B cell (primary cell): ENCODE measurements at regions of chr11 and their contacts with region 1.

Region 1: GRCh38 chr11:4072668-4073285 is 21.8 kb upstream of the RRM1 start:
- DNase-seq: peak; percentile 82
- ATAC-seq: peak; percentile 73
- H3K4me3 ChIP-seq: no peak overlapping the region
- H3K4me3 Mint-ChIP-seq: no peak overlapping the region
- H3K27ac ChIP-seq: peak overlapping the region in 1 of 2 donors; percentile 31
- H3K27ac Mint-ChIP-seq: peak overlapping the region; percentile 5
- H3K4me1 ChIP-seq: peaks cover 4 to 14% of the 10 kb centered on the region in 2 donors
- H3K4me1 Mint-ChIP-seq: peaks cover 20% of the 10 kb centered on the region
- H3K27me3 ChIP-seq: no peaks in the 10 kb centered on the region
- H3K27me3 Mint-ChIP-seq: no peaks in the 10 kb centered on the region
- CTCF ChIP-seq: peak; percentile 95

Region 2: GRCh38 chr11:3767536-3767935 is 305.2 kb before region 1 on chr11:
- CTCF ChIA-PET with region 1: interaction called, 9 read pairs
- POLR2A ChIA-PET with region 1: interaction called, 17 read pairs
- intact Hi-C with region 1: no loop called
- DNase-seq: no peak
- ATAC-seq: no peak
- H3K4me3 ChIP-seq: no peak overlapping the region
- H3K4me3 Mint-ChIP-seq: no peak overlapping the region
- H3K27ac ChIP-seq: no peak overlapping the region
- H3K27ac Mint-ChIP-seq: no peak overlapping the region
- H3K4me1 ChIP-seq: no peaks in the 10 kb centered on the region
- H3K4me1 Mint-ChIP-seq: no peaks in the 10 kb centered on the region
- H3K27me3 ChIP-seq: no peaks in the 10 kb centered on the region
- H3K27me3 Mint-ChIP-seq: no peaks in the 10 kb centered on the region
- CTCF ChIP-seq: no peak

Region 3: DNA sequence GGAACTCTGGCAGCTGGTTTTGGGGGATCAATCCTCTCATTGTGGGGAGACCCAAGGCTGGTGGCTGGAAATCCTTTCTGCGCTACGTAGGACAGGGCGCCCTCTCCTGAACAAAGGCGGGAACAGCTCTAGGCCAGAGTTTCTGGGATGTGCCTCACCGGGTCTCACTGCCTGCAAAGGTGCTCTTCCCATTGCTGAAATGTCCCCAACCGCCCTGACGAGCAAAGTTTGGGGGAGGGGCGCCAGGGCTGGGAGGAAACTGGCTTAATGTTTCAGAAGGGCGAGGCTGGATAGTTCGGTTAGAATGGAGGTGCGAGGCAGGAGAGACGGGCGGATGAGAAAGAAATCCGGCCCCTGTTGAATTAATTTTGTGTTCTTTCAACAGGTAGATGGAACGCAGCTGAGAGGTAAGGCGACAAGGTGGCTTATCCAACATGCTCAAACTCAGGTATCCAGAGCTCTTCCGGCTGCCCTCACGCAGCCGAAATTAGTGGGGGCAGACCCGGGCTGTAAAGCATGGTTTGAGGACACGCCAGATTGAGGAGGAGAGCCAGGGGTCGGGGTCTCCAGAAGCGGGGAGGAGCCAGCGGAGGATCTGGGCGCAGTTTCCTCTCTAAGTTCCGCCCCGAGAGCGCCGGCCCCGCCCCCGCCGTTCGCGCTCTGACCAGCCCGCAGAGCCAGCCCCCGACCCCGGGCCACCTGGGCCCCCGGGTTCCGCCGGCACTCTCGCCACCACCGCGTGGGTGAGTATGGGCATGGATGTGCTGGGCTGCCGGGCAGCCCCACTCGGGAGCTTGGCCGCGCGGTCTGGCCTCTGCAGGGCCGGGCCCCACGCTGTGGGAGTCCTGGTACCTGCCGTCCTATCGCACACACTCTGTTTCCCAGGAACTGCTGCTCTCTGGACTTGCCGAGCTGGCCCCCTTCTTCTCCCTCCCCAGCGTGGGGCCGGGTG is 264.6 kb before region 1 on chr11 and contains the start of gene PGAP2:
- CTCF ChIA-PET with region 1: interaction called, 54 read pairs
- POLR2A ChIA-PET with region 1: interaction called, 3 read pairs
- intact Hi-C with region 1: no loop called
- DNase-seq: peak; percentile 71
- ATAC-seq: peak; percentile 85
- H3K4me3 ChIP-seq: peak within 1 kb of the TSS; percentile 91 to 99 (median 96)
- H3K4me3 Mint-ChIP-seq: peak within 1 kb of the TSS; percentile 98
- H3K27ac ChIP-seq: peak within 1 kb of the TSS; percentile 59 to 60
- H3K27ac Mint-ChIP-seq: peak within 1 kb of the TSS; percentile 92
- H3K4me1 ChIP-seq: peaks cover 6 to 17% of the 10 kb centered on the region in 2 donors
- H3K4me1 Mint-ChIP-seq: peaks cover 11% of the 10 kb centered on the region
- H3K27me3 ChIP-seq: no peaks in the 10 kb centered on the region
- H3K27me3 Mint-ChIP-seq: no peaks in the 10 kb centered on the region
- CTCF ChIP-seq: peak; percentile 61
- total RNA-seq, gene PGAP2: 20.5 and 20.8 TPM in 2 replicates

Region 4: DNA sequence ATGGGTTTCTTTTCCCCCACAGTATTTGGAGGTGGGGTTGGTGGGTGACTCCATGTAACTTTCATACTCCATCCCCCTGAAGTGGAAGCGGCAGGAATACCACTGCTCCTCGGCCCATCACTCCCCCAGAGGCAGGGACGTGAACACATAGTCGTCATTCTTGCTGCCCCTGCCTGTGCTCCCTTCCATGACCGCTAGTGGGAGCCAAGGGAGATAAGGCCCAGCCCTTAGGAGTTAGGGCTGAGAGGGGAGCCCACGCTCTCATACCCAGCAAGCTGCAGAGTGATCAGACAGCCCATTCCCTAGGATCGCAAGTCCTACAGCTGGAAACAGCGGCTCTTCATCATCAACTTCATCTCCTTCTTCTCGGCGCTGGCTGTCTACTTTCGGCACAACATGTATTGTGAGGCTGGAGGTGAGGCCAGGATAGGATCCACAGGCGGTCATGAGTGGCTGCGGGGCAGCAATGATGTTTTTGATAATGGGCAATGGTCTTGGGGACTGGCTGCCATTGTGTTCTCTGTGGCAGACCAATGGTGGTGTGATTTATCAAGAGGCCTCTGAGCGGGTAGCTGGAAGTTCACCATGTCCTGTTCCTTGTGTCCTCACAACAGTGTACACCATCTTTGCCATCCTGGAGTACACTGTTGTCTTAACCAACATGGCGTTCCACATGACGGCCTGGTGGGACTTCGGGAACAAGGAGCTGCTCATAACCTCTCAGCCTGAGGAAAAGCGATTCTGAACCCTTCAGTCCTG is 247.9 kb before region 1 on chr11:
- CTCF ChIA-PET with region 1: interaction called, 18 read pairs
- POLR2A ChIA-PET with region 1: no interaction called
- intact Hi-C with region 1: loop called (anchors 1 kb)
- DNase-seq: peak; percentile 83
- ATAC-seq: peak; percentile 96
- H3K4me3 ChIP-seq: no peak overlapping the region
- H3K4me3 Mint-ChIP-seq: no peak overlapping the region
- H3K27ac ChIP-seq: peak overlapping the region in 1 of 2 donors; percentile 74
- H3K27ac Mint-ChIP-seq: peak overlapping the region; percentile 69
- H3K4me1 ChIP-seq: peaks cover 13 to 15% of the 10 kb centered on the region in 2 donors
- H3K4me1 Mint-ChIP-seq: peaks cover 26% of the 10 kb centered on the region
- H3K27me3 ChIP-seq: no peaks in the 10 kb centered on the region
- H3K27me3 Mint-ChIP-seq: no peaks in the 10 kb centered on the region
- CTCF ChIP-seq: peak; percentile 81

Region 5: GRCh38 chr11:3867209-3868091 is 205.3 kb before region 1 on chr11:
- CTCF ChIA-PET with region 1: interaction called, 20 read pairs
- POLR2A ChIA-PET with region 1: no interaction called
- intact Hi-C with region 1: no loop called
- DNase-seq: peak; percentile 52
- ATAC-seq: peak; percentile 50
- H3K4me3 ChIP-seq: no peak overlapping the region
- H3K4me3 Mint-ChIP-seq: peak overlapping the region; percentile 74
- H3K27ac ChIP-seq: peak overlapping the region; percentile 14 to 55
- H3K27ac Mint-ChIP-seq: peak overlapping the region; percentile 87
- H3K4me1 ChIP-seq: peaks cover 65 to 68% of the 10 kb centered on the region in 2 donors
- H3K4me1 Mint-ChIP-seq: peaks cover 79% of the 10 kb centered on the region
- H3K27me3 ChIP-seq: no peaks in the 10 kb centered on the region
- H3K27me3 Mint-ChIP-seq: no peaks in the 10 kb centered on the region
- CTCF ChIP-seq: no peak

Region 6: DNA sequence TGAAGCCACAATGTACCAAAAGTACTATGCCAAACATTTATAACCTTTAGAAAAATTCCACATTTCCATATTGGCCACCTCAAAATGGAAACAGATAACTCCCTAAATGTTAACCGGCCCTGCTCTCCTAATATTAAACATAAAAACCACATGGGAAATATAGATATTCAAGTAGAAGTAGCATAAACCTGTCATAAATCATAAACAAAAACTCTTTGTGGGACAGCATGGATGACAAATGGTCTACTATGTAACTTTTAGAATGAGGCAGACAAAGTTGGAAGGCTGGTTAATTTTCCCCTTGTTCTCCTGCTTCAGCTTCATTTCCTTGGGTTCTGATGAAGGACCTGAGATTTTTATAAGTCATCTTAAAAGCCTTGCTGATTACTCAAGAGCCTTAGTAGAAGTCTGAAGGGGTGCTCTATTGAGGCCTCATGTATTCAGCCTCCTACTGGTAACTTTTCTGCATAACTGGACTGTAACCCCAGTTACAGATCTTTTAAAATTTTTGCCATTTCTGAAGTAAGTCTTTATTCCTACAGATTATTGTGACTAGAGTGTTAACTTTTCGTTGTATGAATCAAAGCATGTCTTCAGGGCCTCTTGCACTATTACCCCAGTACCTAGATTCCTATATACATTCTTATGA is 100.9 kb before region 1 on chr11:
- CTCF ChIA-PET with region 1: interaction called, 13 read pairs
- POLR2A ChIA-PET with region 1: interaction called, 4 read pairs
- intact Hi-C with region 1: no loop called
- DNase-seq: peak; percentile 33
- ATAC-seq: no peak
- H3K4me3 ChIP-seq: no peak overlapping the region
- H3K4me3 Mint-ChIP-seq: no peak overlapping the region
- H3K27ac ChIP-seq: peak overlapping the region in 1 of 2 donors; percentile 19
- H3K27ac Mint-ChIP-seq: no peak overlapping the region
- H3K4me1 ChIP-seq: no peaks in the 10 kb centered on the region
- H3K4me1 Mint-ChIP-seq: peaks cover 23% of the 10 kb centered on the region
- H3K27me3 ChIP-seq: no peaks in the 10 kb centered on the region
- H3K27me3 Mint-ChIP-seq: no peaks in the 10 kb centered on the region
- CTCF ChIP-seq: peak; percentile 35

Region 7: GRCh38 chr11:4086575-4087353 is 14.0 kb after region 1 on chr11:
- CTCF ChIA-PET with region 1: interaction called, 26 read pairs
- POLR2A ChIA-PET with region 1: no interaction called
- intact Hi-C with region 1: no loop called
- DNase-seq: no peak
- ATAC-seq: no peak
- H3K4me3 ChIP-seq: no peak overlapping the region
- H3K4me3 Mint-ChIP-seq: no peak overlapping the region
- H3K27ac ChIP-seq: no peak overlapping the region
- H3K27ac Mint-ChIP-seq: no peak overlapping the region
- H3K4me1 ChIP-seq: peaks cover 0 to 10% of the 10 kb centered on the region in 2 donors
- H3K4me1 Mint-ChIP-seq: peaks cover 7% of the 10 kb centered on the region
- H3K27me3 ChIP-seq: no peaks in the 10 kb centered on the region
- H3K27me3 Mint-ChIP-seq: no peaks in the 10 kb centered on the region
- CTCF ChIP-seq: no peak

Region 8: DNA sequence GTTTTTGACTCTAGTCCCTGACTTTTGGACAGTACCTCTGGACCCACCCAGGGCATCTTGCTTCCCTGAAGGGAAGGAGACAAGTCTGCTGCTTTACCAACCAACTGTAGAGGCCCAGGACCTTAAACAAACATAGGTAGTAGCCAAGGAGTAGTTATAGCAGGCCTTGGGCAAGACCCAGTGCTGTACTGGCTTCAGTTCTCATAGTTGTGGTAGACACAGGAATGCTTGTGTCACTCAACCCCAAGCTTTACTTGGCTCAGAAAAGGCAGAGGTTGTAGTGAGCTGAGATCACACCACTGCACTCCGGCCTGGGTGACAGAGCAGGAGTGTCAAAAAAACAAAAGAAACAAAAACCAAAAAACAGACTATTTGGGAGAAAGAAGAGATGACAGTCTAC is 450.9 kb after region 1 on chr11:
- CTCF ChIA-PET with region 1: no interaction called
- POLR2A ChIA-PET with region 1: no interaction called
- intact Hi-C with region 1: no loop called
- DNase-seq: no peak
- ATAC-seq: no peak
- H3K4me3 ChIP-seq: no peak overlapping the region
- H3K4me3 Mint-ChIP-seq: no peak overlapping the region
- H3K27ac ChIP-seq: no peak overlapping the region
- H3K27ac Mint-ChIP-seq: no peak overlapping the region
- H3K4me1 ChIP-seq: no peaks in the 10 kb centered on the region
- H3K4me1 Mint-ChIP-seq: no peaks in the 10 kb centered on the region
- H3K27me3 ChIP-seq: peaks cover 0 to 5% (median 2%) of the 10 kb centered on the region in 4 experiments
- H3K27me3 Mint-ChIP-seq: peaks cover 46% of the 10 kb centered on the region
- CTCF ChIP-seq: no peak